ENCODE measurements at regions of chr1 and their contacts with region 1.

Region 1: GRCh38 chr1:231478800-231479199 is 49.7 kb upstream of the TSNAX start:
- DNase-seq: no peak
- H3K4me3 ChIP-seq: no peak overlapping the region
- H3K27ac ChIP-seq: no peak overlapping the region
- H3K4me1 ChIP-seq: no peaks in the 10 kb centered on the region
- H3K27me3 ChIP-seq: no peaks in the 10 kb centered on the region
- CTCF ChIP-seq: no peak

Region 2: DNA sequence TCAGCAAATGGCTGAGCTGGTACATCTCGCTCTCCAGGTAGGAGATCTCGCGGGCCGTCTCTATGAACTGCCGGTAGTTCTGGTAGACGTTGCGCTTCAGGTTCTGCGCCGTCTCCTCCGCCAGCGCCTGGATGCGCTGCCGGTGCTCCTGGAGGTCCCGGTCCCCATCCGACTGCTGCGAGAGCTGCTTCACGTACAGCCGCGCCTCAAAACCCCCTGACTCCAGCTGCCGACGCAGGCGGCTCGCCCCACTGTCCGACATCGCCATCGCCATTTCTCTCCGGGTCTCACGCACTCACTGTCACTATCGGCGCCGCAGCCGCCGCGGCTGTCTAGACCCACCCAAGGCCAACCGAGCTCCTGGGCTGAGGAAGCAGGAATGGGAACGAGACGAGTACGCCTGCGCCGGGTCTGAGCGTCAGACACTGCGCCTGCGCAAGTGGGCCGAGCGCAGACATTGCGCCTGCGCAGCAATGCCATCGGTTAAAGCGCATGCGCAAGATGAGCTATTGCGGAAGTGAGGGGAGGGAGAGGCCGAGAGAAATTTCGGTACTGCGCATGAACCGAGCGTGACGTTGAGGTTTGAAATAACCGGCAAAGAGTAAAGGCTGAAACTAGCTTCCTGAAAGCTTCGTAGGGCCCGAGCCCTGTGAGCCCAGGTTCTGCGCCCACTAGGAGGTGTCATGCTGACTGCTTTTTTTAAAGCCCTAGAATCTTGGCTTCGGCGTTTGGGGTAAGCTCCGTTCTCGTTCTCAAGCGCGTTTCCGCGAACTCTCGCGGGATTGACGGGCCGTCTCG is 141.1 kb before region 1 on chr1 and contains the start of gene EXOC8:
- CTCF ChIA-PET with region 1: no interaction called
- POLR2A ChIA-PET with region 1: no interaction called
- intact Hi-C with region 1: no loop called
- DNase-seq: peak; percentile 98
- H3K4me3 ChIP-seq: peak within 1 kb of the TSS; percentile 74
- H3K27ac ChIP-seq: peak within 1 kb of the TSS; percentile 86
- H3K4me1 ChIP-seq: peaks cover 15% of the 10 kb centered on the region
- H3K27me3 ChIP-seq: no peaks in the 10 kb centered on the region
- CTCF ChIP-seq: no peak
- total RNA-seq, gene EXOC8: 13.0 and 13.8 TPM in 2 replicates

Region 3: GRCh38 chr1:231493421-231494185 is 14.8 kb after region 1 on chr1:
- CTCF ChIA-PET with region 1: no interaction called
- POLR2A ChIA-PET with region 1: interaction called, 19 read pairs
- intact Hi-C with region 1: no loop called
- DNase-seq: peak; percentile 78
- H3K4me3 ChIP-seq: no peak overlapping the region
- H3K27ac ChIP-seq: peak overlapping the region; percentile 4
- H3K4me1 ChIP-seq: peaks cover 8% of the 10 kb centered on the region
- H3K27me3 ChIP-seq: no peaks in the 10 kb centered on the region
- CTCF ChIP-seq: no peak

Region 4: DNA sequence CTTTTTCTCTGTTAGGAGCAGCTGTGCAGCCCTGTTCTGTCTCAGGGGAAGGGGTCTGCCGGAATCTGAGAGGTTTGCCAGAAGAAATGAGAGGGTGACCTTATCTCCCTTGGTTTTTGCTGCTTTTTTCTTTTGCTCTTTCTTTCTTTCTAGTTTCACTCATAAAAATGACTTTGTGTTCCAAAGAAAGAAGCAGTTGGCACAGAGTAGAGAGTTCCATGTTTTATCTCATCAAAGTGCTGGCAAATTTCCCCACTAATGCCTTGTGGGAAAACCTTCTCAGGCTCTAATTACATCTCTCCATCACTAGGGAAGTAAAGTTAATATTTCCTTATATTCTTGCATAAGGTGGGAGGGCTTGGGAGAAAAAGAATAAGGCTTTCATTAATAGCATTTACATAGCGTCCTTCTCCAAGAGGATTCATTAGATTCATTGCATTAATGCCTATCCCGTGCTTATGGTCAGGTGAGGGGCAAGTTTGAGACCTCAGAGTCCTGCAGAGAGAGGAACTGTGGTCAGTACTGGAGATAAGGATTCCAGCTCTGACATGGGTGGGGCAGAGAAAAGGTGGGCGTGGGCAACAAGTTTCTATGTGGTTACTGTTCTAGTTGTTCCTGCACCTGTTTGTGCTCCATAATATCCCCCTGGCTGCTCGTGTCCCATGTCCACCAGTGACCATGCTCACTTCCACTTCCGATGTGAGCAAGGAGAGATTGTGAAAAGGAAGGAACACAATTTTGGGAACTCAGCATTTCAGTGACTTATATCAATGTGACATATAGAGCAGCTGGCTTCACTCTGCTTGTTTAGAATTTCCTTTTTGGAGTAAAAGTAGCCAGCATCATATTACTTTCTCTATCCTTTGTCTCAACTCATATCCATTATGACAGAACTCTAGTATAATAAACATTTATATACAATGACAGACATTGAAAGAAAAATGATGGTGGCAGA is 227.3 kb after region 1 on chr1:
- CTCF ChIA-PET with region 1: no interaction called
- POLR2A ChIA-PET with region 1: no interaction called
- intact Hi-C with region 1: no loop called
- DNase-seq: no peak
- H3K4me3 ChIP-seq: no peak overlapping the region
- H3K27ac ChIP-seq: no peak overlapping the region
- H3K4me1 ChIP-seq: no peaks in the 10 kb centered on the region
- H3K27me3 ChIP-seq: no peaks in the 10 kb centered on the region
- CTCF ChIP-seq: no peak